PC-3 (cell line): ENCODE measurements at regions of chr2 and their contacts with region 1.

Region 1: GRCh38 chr2:54073797-54074196 is 41.6 kb upstream of the ACYP2 start:
- DNase-seq: peak; percentile 96
- ATAC-seq: peak; percentile 80
- H3K4me3 ChIP-seq: no peak overlapping the region
- H3K27ac ChIP-seq: peak overlapping the region; percentile 92
- H3K4me1 ChIP-seq: peaks cover 23% of the 10 kb centered on the region
- H3K27me3 ChIP-seq: no peaks in the 10 kb centered on the region
- CTCF ChIP-seq: no peak

Region 2: GRCh38 chr2:54048117-54048785 is 25.5 kb before region 1 on chr2:
- CTCF ChIA-PET with region 1: no interaction called
- POLR2A ChIA-PET with region 1: no interaction called
- intact Hi-C with region 1: loop called (anchors 2 kb)
- DNase-seq: no peak
- ATAC-seq: no peak
- H3K4me3 ChIP-seq: no peak overlapping the region
- H3K27ac ChIP-seq: no peak overlapping the region
- H3K4me1 ChIP-seq: peaks cover 15% of the 10 kb centered on the region
- H3K27me3 ChIP-seq: no peaks in the 10 kb centered on the region
- CTCF ChIP-seq: no peak

Region 3: GRCh38 chr2:54133056-54133455 is 59.3 kb after region 1 on chr2:
- CTCF ChIA-PET with region 1: no interaction called
- POLR2A ChIA-PET with region 1: no interaction called
- intact Hi-C with region 1: no loop called
- DNase-seq: no peak
- ATAC-seq: no peak
- H3K4me3 ChIP-seq: no peak overlapping the region
- H3K27ac ChIP-seq: no peak overlapping the region
- H3K4me1 ChIP-seq: no peaks in the 10 kb centered on the region
- H3K27me3 ChIP-seq: no peaks in the 10 kb centered on the region
- CTCF ChIP-seq: no peak